ACHN (cell line): ENCODE measurements at regions of chr2 and their contacts with region 1.

Region 1: GRCh38 chr2:168758970-168759820 is 43.2 kb upstream of the NOSTRIN start:
- DNase-seq: peak; percentile 66

Region 2: DNA sequence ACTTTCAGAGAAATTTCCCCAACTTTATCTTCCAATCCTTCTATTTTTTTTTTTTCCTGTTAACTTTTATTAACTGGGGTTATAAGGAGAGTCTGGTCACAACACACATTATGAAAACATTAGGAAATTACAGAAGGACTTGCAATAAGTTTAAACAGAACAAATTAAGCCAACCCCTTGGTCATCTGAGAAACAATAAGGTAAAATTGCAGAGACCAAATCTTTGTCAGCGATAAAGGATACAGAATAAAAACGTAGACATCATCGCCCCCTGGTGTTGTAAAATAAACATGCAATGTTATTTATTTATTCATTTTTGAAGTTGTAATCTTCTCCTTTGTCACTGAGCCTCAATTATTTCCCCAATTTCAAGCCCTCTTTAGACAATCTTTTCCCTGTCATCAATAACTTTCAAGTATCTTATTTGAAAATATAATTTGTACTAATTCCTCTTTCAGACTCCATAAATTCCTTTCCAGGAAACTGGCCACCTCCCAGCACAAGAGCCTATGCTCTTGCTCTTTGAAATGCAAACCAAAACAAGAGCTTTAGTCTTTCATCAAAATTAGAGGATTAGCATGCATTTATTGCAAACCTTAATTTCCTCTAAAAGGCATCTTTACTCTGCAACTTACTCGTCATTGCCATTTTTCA is 161.4 kb after region 1 on chr2:
- in situ Hi-C with region 1: loop called (anchors 25 kb)
- DNase-seq: peak; percentile 45